ENCODE measurements at regions of chr14 and their contacts with region 1.

Region 1: GRCh38 chr14:75487155-75487671 is 35.1 kb upstream of the BATF start:
- DNase-seq: no peak
- ATAC-seq: no peak
- H3K4me3 ChIP-seq: no peak overlapping the region
- H3K27ac ChIP-seq: no peak overlapping the region
- H3K4me1 ChIP-seq: no peaks in the 10 kb centered on the region
- H3K27me3 ChIP-seq: no peaks in the 10 kb centered on the region
- CTCF ChIP-seq: no peak

Region 2: GRCh38 chr14:75307700-75308379 is 179.4 kb before region 1 on chr14:
- intact Hi-C with region 1: loop called (anchors 1 kb)
- DNase-seq: peak; percentile 85 to 92
- ATAC-seq: peak; percentile 78 to 85 (median 81)
- H3K4me3 ChIP-seq: no peak overlapping the region
- H3K27ac ChIP-seq: no peak overlapping the region
- H3K4me1 ChIP-seq: peaks cover 13% of the 10 kb centered on the region
- H3K27me3 ChIP-seq: no peaks in the 10 kb centered on the region
- CTCF ChIP-seq: peak; percentile 94

Measured in psoas muscle (tissue), 8 donors.